ENCODE measurements at regions of chr10 and their contacts with region 1.

Region 1: GRCh38 chr10:101297901-101298486 is 56.0 kb upstream of the BTRC start:
- DNase-seq: peak; percentile 84
- H3K4me3 Mint-ChIP-seq: no peak overlapping the region
- H3K27ac Mint-ChIP-seq: no peak overlapping the region
- H3K4me1 Mint-ChIP-seq: no peaks in the 10 kb centered on the region
- H3K27me3 Mint-ChIP-seq: peaks cover 39% of the 10 kb centered on the region

Region 2: GRCh38 chr10:100766693-100767421 is 531.1 kb before region 1 on chr10:
- CTCF ChIA-PET with region 1: no interaction called
- POLR2A ChIA-PET with region 1: no interaction called
- intact Hi-C with region 1: no loop called
- DNase-seq: no peak
- H3K4me3 Mint-ChIP-seq: no peak overlapping the region
- H3K27ac Mint-ChIP-seq: no peak overlapping the region
- H3K4me1 Mint-ChIP-seq: no peaks in the 10 kb centered on the region
- H3K27me3 Mint-ChIP-seq: peaks cover 40% of the 10 kb centered on the region

Region 3: DNA sequence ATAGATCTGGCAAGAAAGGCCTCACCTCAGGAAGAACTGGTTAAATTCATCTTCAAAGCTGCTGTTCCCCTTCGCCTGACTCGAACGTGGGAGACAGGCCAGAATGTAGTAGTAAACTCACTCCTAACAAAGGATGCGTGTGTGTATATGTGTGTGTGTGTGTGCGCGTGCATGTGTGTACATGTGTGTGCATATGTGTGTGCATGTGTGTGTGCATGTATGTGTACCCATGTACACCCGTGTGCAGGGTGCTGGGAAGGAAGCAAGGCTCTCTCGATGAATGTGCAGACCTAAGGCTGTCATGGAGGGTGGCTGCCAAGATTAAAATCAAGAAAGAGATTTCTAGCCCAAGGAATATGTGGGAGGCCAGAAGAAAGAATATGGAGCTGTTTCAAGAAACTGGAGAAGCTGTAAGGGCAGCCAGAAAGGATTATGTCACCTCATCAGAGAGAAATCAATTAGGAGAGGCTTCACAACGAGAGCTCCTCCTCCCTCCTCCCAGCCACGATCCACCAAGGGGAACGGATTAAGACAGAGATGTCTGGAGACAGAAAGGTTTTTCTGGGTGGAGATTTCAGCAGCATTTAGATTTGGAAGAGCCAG is 34.7 kb before region 1 on chr10:
- CTCF ChIA-PET with region 1: interaction called, 10 read pairs
- POLR2A ChIA-PET with region 1: no interaction called
- intact Hi-C with region 1: no loop called
- DNase-seq: no peak
- H3K4me3 Mint-ChIP-seq: no peak overlapping the region
- H3K27ac Mint-ChIP-seq: no peak overlapping the region
- H3K4me1 Mint-ChIP-seq: no peaks in the 10 kb centered on the region
- H3K27me3 Mint-ChIP-seq: peaks cover 13% of the 10 kb centered on the region